ENCODE measurements at regions of chr4 and their contacts with region 1.

Region 1: DNA sequence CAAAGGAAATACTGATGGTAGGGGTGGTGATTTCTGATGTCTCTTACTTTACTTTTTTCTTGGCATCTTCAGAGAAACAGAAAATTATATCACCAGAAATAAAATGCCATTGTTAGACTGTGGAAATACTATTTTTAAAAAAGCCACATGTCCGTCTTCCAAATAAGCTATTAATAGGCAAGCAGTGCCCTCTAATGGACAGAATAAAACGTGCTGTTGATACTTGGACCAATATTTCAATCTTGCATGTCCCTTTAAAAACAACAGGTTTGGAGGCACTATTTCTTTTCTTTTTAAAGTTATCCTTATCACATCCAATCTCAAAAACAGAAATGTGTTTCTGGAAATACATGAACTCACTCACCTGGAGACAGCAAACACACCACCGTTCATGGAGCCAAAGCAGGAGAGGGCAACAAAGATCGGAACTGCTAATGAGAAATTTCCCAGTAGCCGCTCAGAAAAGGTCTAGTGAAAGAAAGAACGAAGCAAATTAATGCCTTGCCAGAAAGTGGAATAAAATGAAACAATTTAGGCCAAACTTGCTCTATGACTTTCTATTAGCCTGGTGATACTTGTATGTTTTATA is 59.2 kb downstream of the SLC7A11 start:
- DNase-seq: no peak
- ATAC-seq: peak; percentile 61
- H3K4me3 ChIP-seq: no peak overlapping the region
- H3K27ac ChIP-seq: no peak overlapping the region
- H3K4me1 ChIP-seq: no peaks in the 10 kb centered on the region
- H3K27me3 ChIP-seq: no peaks in the 10 kb centered on the region
- CTCF ChIP-seq: peak; percentile 35 to 67 (median 59); a peak in 5 of 6 replicates
- EP300 ChIP-seq: no peak
- POLR2A ChIP-seq: no peak
- RAD21 ChIP-seq: peak; percentile 84

Region 2: DNA sequence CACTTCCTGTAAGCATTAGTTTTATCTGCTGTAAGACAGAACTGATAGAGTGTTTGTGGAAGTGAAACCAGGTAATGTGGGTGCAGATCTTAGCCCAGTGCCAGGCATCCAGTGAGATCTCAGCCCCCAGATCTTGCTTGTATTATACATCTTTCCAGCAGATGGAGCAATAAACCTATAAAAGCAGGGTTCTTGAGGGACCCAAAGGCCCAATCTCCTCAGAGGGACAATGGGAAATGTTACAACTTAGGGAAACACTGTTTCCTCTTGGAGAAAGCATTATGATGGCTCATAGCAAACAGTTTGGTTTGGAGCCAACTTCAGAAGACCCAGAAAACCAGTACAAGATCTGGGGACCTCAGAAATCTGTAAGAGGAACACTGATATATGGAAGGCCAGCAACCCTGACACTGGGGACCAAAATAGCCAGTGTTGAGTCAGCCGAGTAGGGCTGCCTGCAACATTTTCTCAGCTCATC is 147.1 kb before region 1 on chr4:
- CTCF ChIA-PET with region 1: interaction called, 29 read pairs
- POLR2A ChIA-PET with region 1: no interaction called
- RAD21 ChIA-PET with region 1: interaction called, 9 read pairs
- SMC1A ChIA-PET with region 1: interaction called, 30 read pairs
- in situ Hi-C with region 1: no loop called
- intact Hi-C with region 1: loop called (anchors 1 kb)
- DNase-seq: peak; percentile 69
- ATAC-seq: peak; percentile 100
- H3K4me3 ChIP-seq: no peak overlapping the region
- H3K27ac ChIP-seq: no peak overlapping the region
- H3K4me1 ChIP-seq: no peaks in the 10 kb centered on the region
- H3K27me3 ChIP-seq: no peaks in the 10 kb centered on the region
- CTCF ChIP-seq: peak; percentile 44 to 71 (median 64); a peak in 5 of 6 replicates
- EP300 ChIP-seq: 0 out of 4 replicates have a peak, but pooled peaks of 1 of the 2 experiments have one; percentile 43
- POLR2A ChIP-seq: no peak
- RAD21 ChIP-seq: peak; percentile 86

Region 3: DNA sequence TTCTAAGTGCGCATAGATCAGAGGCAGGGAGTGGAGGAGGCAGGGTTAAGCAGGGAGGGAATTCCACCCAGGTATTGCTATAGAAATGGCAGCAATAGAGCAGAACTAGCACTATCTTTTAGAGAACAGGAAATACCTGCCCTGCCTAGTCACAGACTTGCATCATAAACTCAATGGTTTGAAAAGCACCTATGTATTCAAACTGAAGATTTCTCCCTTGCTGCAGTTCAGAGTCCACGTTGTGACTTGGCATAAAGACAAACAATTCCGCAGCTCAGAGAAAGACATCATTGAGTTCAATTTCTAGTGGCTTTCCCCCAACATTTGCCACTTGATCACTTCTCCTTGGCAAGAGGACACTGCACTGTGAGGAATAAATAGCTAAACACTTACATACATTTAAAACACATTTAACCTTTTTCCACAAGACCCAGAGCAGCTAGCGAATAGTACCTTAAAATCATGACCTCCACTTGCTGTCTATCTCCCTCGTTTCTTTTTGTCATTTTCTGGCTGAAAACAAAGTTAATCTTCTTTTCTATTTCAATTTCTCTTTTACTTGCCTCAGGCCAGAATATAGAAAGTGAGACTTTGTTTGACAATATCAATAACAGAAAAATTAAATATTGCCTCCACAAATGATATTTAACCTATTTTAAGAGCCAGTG is 16.8 kb after region 1 on chr4:
- CTCF ChIA-PET with region 1: interaction called, 6 read pairs
- POLR2A ChIA-PET with region 1: interaction called, 5 read pairs
- RAD21 ChIA-PET with region 1: interaction called, 8 read pairs
- SMC1A ChIA-PET with region 1: interaction called, 71 read pairs
- in situ Hi-C with region 1: no loop called
- intact Hi-C with region 1: no loop called
- DNase-seq: no peak
- ATAC-seq: peak; percentile 89
- H3K4me3 ChIP-seq: peak overlapping the region; percentile 53; the same call in 1 of the 2 replicates
- H3K27ac ChIP-seq: peak overlapping the region; percentile 74
- H3K4me1 ChIP-seq: peaks cover 3% of the 10 kb centered on the region; the same call in 1 of the 2 replicates
- H3K27me3 ChIP-seq: no peaks in the 10 kb centered on the region
- CTCF ChIP-seq: no peak
- EP300 ChIP-seq: no peak
- POLR2A ChIP-seq: no peak
- RAD21 ChIP-seq: no peak

Region 4: DNA sequence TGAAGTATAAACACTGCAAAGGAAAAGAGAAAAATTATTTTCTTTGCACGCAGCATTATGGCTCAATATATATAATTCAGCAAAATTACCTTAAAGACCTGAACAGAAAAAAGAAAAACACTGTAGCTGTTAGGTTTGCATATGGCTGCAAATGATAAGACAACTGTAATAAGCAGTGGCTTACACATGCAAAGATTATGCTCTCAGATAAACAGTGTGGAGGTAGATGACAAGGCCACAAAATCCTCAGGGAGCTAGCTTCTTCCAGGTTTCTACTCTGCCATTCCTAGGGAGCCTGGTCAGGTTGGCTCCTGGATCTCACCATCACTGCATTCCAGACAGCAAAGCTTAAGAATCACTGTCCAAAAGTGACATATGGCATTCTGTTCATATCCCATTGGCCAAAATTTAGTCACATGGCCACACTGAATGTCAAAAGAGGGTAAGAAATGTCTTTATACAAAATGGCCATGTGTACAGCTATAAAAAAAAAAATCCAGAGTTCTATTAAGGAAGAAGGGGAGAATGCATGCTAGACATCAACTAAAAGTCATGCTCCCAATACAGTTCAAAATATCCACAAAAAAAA is 254.4 kb after region 1 on chr4:
- CTCF ChIA-PET with region 1: no interaction called
- POLR2A ChIA-PET with region 1: no interaction called
- RAD21 ChIA-PET with region 1: no interaction called
- SMC1A ChIA-PET with region 1: no interaction called
- in situ Hi-C with region 1: no loop called
- intact Hi-C with region 1: no loop called
- DNase-seq: no peak
- ATAC-seq: no peak
- H3K4me3 ChIP-seq: no peak overlapping the region
- H3K27ac ChIP-seq: no peak overlapping the region
- H3K4me1 ChIP-seq: no peaks in the 10 kb centered on the region
- H3K27me3 ChIP-seq: no peaks in the 10 kb centered on the region
- CTCF ChIP-seq: no peak
- EP300 ChIP-seq: no peak
- POLR2A ChIP-seq: no peak
- RAD21 ChIP-seq: no peak

Region 5: GRCh38 chr4:138522366-138522765 is 339.4 kb after region 1 on chr4:
- CTCF ChIA-PET with region 1: interaction called, 13 read pairs
- POLR2A ChIA-PET with region 1: no interaction called
- RAD21 ChIA-PET with region 1: interaction called, 4 read pairs
- SMC1A ChIA-PET with region 1: interaction called, 4 read pairs
- in situ Hi-C with region 1: no loop called
- intact Hi-C with region 1: loop called (anchors 5 kb)
- DNase-seq: no peak
- ATAC-seq: peak; percentile 85
- H3K4me3 ChIP-seq: no peak overlapping the region
- H3K27ac ChIP-seq: no peak overlapping the region
- H3K4me1 ChIP-seq: no peaks in the 10 kb centered on the region
- H3K27me3 ChIP-seq: no peaks in the 10 kb centered on the region
- CTCF ChIP-seq: peak; percentile 35 to 57 (median 52); a peak in 4 of 6 replicates
- EP300 ChIP-seq: no peak
- POLR2A ChIP-seq: no peak
- RAD21 ChIP-seq: peak; percentile 69

Region 6: GRCh38 chr4:139392797-139393196 is 1209.9 kb after region 1 on chr4:
- CTCF ChIA-PET with region 1: no interaction called
- POLR2A ChIA-PET with region 1: no interaction called
- RAD21 ChIA-PET with region 1: no interaction called
- SMC1A ChIA-PET with region 1: no interaction called
- in situ Hi-C with region 1: no loop called
- intact Hi-C with region 1: no loop called
- DNase-seq: no peak
- ATAC-seq: no peak
- H3K4me3 ChIP-seq: no peak overlapping the region
- H3K27ac ChIP-seq: no peak overlapping the region
- H3K4me1 ChIP-seq: no peaks in the 10 kb centered on the region
- H3K27me3 ChIP-seq: no peaks in the 10 kb centered on the region
- CTCF ChIP-seq: no peak
- EP300 ChIP-seq: no peak
- POLR2A ChIP-seq: no peak
- RAD21 ChIP-seq: no peak